ENCODE measurements at regions of chr17 and their contacts with region 1.

Region 1: DNA sequence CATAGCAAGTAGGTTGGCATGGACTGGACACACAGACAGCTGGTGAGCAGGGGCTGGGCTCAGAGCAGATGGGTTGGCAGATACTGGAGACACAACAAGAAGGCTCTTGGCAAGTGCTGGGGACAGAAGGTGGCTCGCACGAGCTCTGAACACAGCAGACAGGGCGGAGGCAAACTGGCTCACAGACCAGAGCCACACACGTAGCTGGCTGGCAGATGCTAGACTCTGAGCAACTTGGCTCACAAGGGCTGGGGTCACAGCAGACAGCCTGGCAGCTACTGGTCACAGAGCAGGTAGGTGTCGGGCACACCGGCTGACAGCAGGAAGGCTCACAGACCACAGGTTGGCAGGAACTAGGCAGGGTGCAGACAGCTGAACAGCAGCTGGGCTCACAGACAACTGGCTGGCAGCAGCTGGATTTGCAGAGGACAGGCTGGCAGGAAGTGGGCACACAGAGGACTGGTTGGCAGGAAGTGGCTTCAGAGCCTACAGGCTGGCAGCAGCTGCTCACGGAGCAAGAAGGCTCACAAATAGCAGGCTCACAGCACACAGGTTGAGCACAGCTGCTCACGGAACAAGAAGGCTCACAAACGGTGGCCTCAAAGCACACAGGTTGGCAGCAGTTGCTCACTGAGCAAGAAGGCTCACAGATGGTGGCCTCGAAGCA is 725 bp downstream of the KRTAP16-1 start:
- DNase-seq: peak in 8 of 9 donors; percentile 56 to 94 (median 92)
- ATAC-seq: peak; percentile 91
- H3K4me3 ChIP-seq: peak overlapping the region; percentile 24
- H3K4me3 Mint-ChIP-seq: peak overlapping the region; percentile 65 to 89 (median 78)
- H3K27ac ChIP-seq: peak overlapping the region; percentile 75
- H3K27ac Mint-ChIP-seq: peak overlapping the region; percentile 82 to 100 (median 98)
- H3K4me1 ChIP-seq: peaks cover 41 to 49% of the 10 kb centered on the region in 2 donors
- H3K4me1 Mint-ChIP-seq: peaks cover 28 to 80% (median 70%) of the 10 kb centered on the region in 7 donors
- H3K27me3 ChIP-seq: no peaks in the 10 kb centered on the region
- H3K27me3 Mint-ChIP-seq: peaks cover 0 to 8% (median 0%) of the 10 kb centered on the region in 5 donors

Region 2: DNA sequence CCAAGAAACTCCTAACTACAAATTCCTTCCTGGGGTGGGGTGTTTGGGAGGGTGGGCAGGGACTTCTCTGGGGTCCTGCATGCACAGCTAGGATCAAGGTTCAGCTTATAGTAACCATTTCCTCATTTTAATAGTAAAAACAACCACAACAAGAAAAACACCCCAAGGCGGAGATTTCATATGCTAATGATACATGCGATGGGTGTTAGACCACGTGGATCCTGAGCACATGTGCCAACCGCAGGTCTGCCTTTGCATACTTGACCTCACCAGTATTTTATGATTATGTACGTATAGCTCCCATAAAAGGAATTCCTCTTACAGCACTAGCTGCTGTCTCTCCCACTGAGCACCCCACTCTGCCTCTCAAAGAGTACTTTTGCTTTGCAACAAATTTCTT is 192.1 kb before region 1 on chr17:
- CTCF ChIA-PET with region 1: interaction called, 3 read pairs
- POLR2A ChIA-PET with region 1: interaction called, 4 read pairs
- intact Hi-C with region 1: loop called in 1 of 2 experiments (anchors 1 kb)
- DNase-seq: no peak
- ATAC-seq: peak; percentile 36
- H3K4me3 ChIP-seq: no peak overlapping the region
- H3K4me3 Mint-ChIP-seq: no peak overlapping the region
- H3K27ac ChIP-seq: no peak overlapping the region
- H3K27ac Mint-ChIP-seq: no peak overlapping the region
- H3K4me1 ChIP-seq: peaks cover 5 to 7% of the 10 kb centered on the region in 2 donors
- H3K4me1 Mint-ChIP-seq: peaks cover 4 to 40% (median 29%) of the 10 kb centered on the region in 7 donors
- H3K27me3 ChIP-seq: no peaks in the 10 kb centered on the region
- H3K27me3 Mint-ChIP-seq: peaks cover 0 to 15% (median 0%) of the 10 kb centered on the region in 5 donors

Region 3: GRCh38 chr17:41392278-41392677 is 83.9 kb after region 1 on chr17:
- CTCF ChIA-PET with region 1: no interaction called
- POLR2A ChIA-PET with region 1: no interaction called
- intact Hi-C with region 1: no loop called
- DNase-seq: no peak
- ATAC-seq: no peak
- H3K4me3 ChIP-seq: no peak overlapping the region
- H3K4me3 Mint-ChIP-seq: no peak overlapping the region
- H3K27ac ChIP-seq: no peak overlapping the region
- H3K27ac Mint-ChIP-seq: no peak overlapping the region
- H3K4me1 ChIP-seq: no peaks in the 10 kb centered on the region
- H3K4me1 Mint-ChIP-seq: peaks cover 0 to 10% (median 5%) of the 10 kb centered on the region in 7 donors
- H3K27me3 ChIP-seq: no peaks in the 10 kb centered on the region
- H3K27me3 Mint-ChIP-seq: peaks cover 0 to 13% (median 9%) of the 10 kb centered on the region in 5 donors

Measured in naive thymus-derived CD4-positive, alpha-beta T cell (primary cell).